Ascending aorta (tissue), 2 donors: ENCODE measurements at regions of chr2 and their contacts with region 1.

Region 1: GRCh38 chr2:39436592-39437510 is at the start of gene MAP4K3:
- DNase-seq: peak; percentile 64 to 96
- H3K4me3 ChIP-seq: peak within 1 kb of the TSS; percentile 97 to 99
- H3K27ac ChIP-seq: peak within 1 kb of the TSS; percentile 83 to 98
- H3K4me1 ChIP-seq: peaks cover 6 to 35% of the 10 kb centered on the region in 2 donors
- H3K27me3 ChIP-seq: no peaks in the 10 kb centered on the region
- CTCF ChIP-seq: peak in 1 of 3 experiments; percentile 7
- total RNA-seq, gene MAP4K3: 34.1 TPM

Region 2: DNA sequence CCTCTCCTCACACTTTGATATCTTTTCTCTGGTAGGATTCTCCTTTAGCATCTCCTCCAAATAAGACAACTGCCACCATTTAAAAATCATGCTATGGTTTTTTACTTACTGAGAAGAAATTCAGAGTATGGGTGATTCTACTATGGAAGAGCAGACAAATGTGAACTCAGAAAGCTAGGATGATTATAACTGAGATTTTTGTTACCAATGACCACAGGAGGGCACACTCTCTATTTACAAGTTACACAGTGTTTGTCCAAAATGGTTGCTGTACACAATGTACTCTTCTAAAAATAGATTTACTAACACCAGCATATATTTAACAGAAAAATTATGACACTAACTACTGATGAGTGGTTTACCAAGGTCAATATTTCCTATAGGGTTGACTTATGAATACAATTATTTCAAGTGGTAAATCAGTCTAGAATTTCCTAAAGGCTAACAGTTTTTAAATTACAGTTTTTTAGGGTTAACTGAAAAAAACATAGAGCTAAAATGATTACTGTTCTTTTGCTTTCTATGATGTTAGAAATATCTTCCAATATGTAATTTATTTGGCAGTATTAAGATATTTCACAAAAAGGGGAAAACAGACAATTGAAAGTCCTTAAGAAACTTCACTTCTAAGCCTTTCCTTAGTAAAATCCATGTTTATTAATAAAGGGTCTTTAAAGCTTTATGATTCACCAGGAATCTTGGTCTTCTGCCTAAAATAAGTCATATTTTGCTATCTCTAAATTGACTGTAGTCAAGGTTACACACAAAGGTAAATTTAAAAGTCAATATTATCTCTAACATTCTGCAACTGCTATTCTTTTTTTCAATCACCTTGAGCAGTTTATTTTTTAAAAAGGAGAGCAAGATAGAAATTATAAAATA is 57.0 kb before region 1 on chr2:
- intact Hi-C with region 1: loop called (anchors 2 kb)
- DNase-seq: no peak
- H3K4me3 ChIP-seq: no peak overlapping the region
- H3K27ac ChIP-seq: peak overlapping the region; percentile 24 to 26
- H3K4me1 ChIP-seq: peaks cover 4 to 33% of the 10 kb centered on the region in 2 donors
- H3K27me3 ChIP-seq: no peaks in the 10 kb centered on the region
- CTCF ChIP-seq: peak; percentile 33 to 61 (median 40)

Region 3: GRCh38 chr2:39416140-39416539 is 20.7 kb before region 1 on chr2:
- intact Hi-C with region 1: loop called (anchors 2 kb)
- DNase-seq: no peak
- H3K4me3 ChIP-seq: no peak overlapping the region
- H3K27ac ChIP-seq: no peak overlapping the region
- H3K4me1 ChIP-seq: peaks cover 0 to 45% of the 10 kb centered on the region in 2 donors
- H3K27me3 ChIP-seq: no peaks in the 10 kb centered on the region
- CTCF ChIP-seq: no peak

Region 4: GRCh38 chr2:39469807-39470206 is 33.0 kb after region 1 on chr2:
- intact Hi-C with region 1: loop called (anchors 2 kb)
- DNase-seq: no peak
- H3K4me3 ChIP-seq: peak overlapping the region in 1 of 2 donors; percentile 13
- H3K27ac ChIP-seq: peak overlapping the region; percentile 79
- H3K4me1 ChIP-seq: peaks cover 0 to 23% of the 10 kb centered on the region in 2 donors
- H3K27me3 ChIP-seq: no peaks in the 10 kb centered on the region
- CTCF ChIP-seq: no peak

Region 5: DNA sequence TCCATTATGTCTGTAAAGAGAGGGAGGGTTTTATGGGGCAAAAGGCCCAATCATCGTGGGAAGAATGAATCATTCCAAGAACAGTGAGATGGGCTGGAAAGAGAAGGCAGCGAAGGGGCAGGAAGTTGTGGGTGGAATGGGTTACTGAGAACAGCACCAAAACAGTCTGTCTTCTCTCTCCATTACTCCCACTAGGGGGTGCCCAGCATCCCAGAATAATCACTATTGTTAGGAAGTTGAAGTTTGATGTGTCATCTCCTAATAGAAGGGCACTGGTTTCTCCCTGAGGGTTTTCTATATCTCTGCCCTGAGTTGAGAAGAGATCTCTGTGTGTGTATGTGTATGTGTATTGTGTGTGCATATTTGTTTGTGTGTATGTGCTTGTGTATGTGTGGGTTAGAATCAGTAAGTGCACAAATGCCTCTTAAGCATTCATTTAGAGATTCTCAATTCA is 76.8 kb after region 1 on chr2:
- intact Hi-C with region 1: loop called (anchors 5 kb)
- DNase-seq: peak in 1 of 2 donors; percentile 91
- H3K4me3 ChIP-seq: no peak overlapping the region
- H3K27ac ChIP-seq: peak overlapping the region; percentile 43 to 69
- H3K4me1 ChIP-seq: peaks cover 12 to 37% of the 10 kb centered on the region in 2 donors
- H3K27me3 ChIP-seq: no peaks in the 10 kb centered on the region
- CTCF ChIP-seq: peak; percentile 52 to 61 (median 60)

Region 6: DNA sequence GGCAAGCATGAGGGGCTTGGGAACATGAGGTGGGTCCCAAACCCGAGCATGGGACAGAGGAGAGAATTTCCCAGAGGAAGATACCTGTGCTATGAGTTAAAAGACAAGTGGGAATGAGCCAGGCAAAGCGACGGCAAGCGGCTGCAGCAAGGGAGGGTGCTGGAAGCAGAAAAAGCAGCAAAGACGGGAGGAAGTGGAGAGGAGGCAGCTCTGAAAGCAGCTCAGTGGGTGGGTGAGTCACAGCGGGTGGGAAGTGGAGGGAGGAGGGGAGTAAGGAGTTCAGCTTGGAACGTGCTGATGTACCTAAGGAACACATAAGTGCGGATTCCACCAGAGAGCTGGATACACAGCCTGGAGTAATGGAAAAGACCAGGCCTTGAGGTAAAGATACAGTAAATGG is 300.8 kb after region 1 on chr2:
- intact Hi-C with region 1: loop called (anchors 5 kb)
- DNase-seq: peak in 1 of 2 donors; percentile 88
- H3K4me3 ChIP-seq: peak overlapping the region in 1 of 2 donors; percentile 57
- H3K27ac ChIP-seq: peak overlapping the region; percentile 75 to 84
- H3K4me1 ChIP-seq: peaks cover 0 to 28% of the 10 kb centered on the region in 2 donors
- H3K27me3 ChIP-seq: no peaks in the 10 kb centered on the region
- CTCF ChIP-seq: no peak

Region 7: DNA sequence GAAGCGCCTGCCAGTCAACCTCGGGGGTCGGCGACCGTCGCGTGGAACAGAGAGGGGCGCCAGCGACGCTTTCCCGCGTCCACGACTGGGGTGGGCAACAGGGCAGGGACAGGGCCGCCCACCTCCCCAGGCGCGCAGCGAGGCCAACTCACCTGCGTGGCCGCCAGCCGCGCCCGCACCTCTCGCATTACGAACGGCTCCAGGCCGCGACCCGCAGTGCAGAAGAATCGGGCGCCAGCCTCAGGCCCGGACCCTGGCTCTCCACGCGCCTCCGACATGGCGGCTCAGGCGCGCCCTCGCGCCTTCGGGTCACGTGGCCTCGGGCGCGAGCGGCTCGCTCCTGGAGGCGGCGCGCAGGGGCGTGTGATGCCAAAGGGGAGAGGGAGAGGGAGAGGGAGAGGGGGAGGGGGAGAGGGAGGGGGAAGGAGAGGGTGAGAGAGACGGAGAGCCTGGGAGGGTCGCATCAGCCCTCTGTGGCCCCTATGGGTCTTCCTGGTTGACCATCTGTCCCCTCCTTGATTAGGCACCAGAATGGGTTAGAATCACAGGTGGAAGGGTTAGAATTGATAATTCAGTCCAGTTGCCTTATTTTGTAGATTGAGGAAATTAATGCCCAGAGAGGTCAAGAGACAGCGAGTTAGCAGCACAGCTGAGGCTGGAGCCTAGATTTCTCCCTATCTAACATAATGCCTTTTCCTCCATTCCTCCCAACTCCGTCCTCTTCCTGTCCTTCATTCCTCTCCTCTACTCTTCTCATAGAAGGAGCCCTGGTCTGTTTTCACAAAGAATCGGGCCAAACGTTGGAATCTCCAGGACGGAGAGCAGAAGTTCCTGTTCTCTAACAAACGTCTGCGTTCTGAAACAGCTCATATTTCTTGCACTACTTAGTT is 342.4 kb after region 1 on chr2 and contains the start of gene THUMPD2:
- intact Hi-C with region 1: loop called (anchors 5 kb)
- DNase-seq: peak in 1 of 2 donors; percentile 83
- H3K4me3 ChIP-seq: peak within 1 kb of the TSS; percentile 95 to 98
- H3K27ac ChIP-seq: peak within 1 kb of the TSS; percentile 89 to 92
- H3K4me1 ChIP-seq: peaks cover 3 to 20% of the 10 kb centered on the region in 2 donors
- H3K27me3 ChIP-seq: no peaks in the 10 kb centered on the region
- CTCF ChIP-seq: no peak
- total RNA-seq, gene THUMPD2: 13.0 TPM